ENCODE measurements at regions of chr19 and their contacts with region 1.

Region 1: GRCh38 chr19:4791170-4792018 is at the start of gene FEM1A:
- DNase-seq: peak; percentile 99
- H3K4me3 Mint-ChIP-seq: peak within 1 kb of the TSS; percentile 80
- H3K27ac Mint-ChIP-seq: peak within 1 kb of the TSS; percentile 81
- H3K4me1 Mint-ChIP-seq: peaks cover 38% of the 10 kb centered on the region
- H3K27me3 Mint-ChIP-seq: no peaks in the 10 kb centered on the region
- total RNA-seq, gene FEM1A: 9.2 to 9.3 TPM

Region 2: DNA sequence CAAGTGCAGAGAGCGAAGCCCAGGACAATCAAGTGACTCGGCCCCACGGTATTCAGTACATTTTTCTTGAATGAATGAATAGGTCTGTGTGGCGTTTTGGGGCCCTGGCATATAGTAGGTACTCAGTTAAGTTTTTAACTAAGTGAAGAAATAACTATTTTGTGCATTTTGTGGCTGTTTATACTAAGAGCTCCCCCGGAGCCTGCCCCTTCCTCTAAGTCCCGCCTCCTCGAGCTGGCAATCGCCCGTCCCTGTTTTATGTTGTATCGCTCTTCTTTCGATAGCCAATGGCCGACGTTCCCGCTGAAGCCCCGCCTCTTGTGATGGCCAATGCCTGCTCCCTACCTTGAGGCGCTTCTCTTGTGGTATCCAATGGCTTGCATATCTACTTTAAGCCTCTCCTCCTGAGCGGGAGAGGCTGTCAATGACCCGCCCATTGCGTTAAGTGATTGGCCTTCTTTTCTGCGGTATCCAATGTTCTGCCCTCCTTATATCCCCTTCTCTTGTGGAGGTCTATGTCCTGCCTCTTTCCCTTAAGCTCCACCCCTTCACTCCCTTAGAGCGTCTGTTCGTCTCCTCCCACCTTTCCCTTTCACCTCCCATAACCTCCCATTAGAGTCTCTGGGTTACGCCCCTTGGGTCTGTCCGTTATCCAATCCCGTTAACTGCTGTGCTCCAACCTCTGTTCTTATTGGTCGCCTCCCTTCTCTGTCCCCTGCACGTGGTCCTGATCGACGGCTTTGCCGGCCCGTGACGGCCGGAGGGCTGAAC is 319.8 kb before region 1 on chr19:
- CTCF ChIA-PET with region 1: interaction called, 4 read pairs
- POLR2A ChIA-PET with region 1: interaction called, 3 read pairs
- intact Hi-C with region 1: loop called (anchors 5 kb)
- DNase-seq: peak; percentile 99
- H3K4me3 Mint-ChIP-seq: no peak overlapping the region
- H3K27ac Mint-ChIP-seq: no peak overlapping the region
- H3K4me1 Mint-ChIP-seq: peaks cover 21% of the 10 kb centered on the region
- H3K27me3 Mint-ChIP-seq: no peaks in the 10 kb centered on the region

Region 3: GRCh38 chr19:4669723-4670480 is 121.5 kb before region 1 on chr19 and contains the start of gene MYDGF:
- CTCF ChIA-PET with region 1: interaction called, 3 read pairs
- POLR2A ChIA-PET with region 1: no interaction called
- intact Hi-C with region 1: loop called (anchors 1 kb)
- DNase-seq: peak; percentile 95
- H3K4me3 Mint-ChIP-seq: peak within 1 kb of the TSS; percentile 87
- H3K27ac Mint-ChIP-seq: peak within 1 kb of the TSS; percentile 75
- H3K4me1 Mint-ChIP-seq: peaks cover 18% of the 10 kb centered on the region
- H3K27me3 Mint-ChIP-seq: no peaks in the 10 kb centered on the region
- total RNA-seq, gene MYDGF: 72.9 to 74.7 TPM

Region 4: DNA sequence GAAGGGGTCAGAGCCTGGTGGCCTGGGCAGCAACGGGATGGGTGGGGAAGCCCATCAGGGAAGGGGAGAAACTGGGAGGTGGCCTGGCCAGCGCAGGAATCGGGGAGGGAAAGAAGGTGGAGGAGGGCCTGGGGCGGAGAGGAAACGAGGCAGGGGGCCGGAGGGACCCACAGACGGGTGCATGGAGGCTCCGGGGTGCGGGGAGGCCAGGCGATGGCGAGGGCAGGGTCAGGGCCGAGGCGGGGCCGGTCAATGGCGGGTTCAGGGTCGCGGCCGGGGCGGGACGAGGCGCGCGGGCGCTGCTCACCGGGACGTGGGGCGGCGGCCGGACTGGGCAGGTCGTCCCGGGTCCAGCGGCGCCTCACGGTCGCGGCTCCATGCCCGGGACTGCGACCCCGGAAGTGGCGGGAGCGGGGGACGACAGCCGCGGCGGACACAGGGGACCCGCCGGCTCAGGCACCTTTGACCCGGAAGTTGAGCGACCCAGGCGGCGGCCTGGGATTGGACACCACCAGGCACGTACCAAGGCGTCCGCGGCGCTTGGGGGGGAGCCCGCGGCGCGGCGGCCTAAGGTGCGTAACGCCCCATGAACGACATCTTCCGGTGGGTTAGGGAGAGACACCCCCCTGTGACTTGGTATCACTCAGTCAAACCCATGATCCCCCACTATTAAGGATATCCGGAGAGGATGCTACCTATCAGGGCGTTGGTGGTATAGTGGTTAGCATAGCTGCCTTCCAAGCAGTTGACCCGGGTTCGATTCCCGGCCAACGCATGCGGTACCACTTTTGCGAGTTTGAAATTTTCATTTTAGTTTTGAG is 67.8 kb before region 1 on chr19 and contains the start of gene DPP9:
- CTCF ChIA-PET with region 1: interaction called, 161 read pairs
- POLR2A ChIA-PET with region 1: interaction called, 13 read pairs
- intact Hi-C with region 1: loop called (anchors 1 kb)
- DNase-seq: peak; percentile 98
- H3K4me3 Mint-ChIP-seq: peak within 1 kb of the TSS; percentile 84
- H3K27ac Mint-ChIP-seq: peak within 1 kb of the TSS; percentile 95
- H3K4me1 Mint-ChIP-seq: peaks cover 28% of the 10 kb centered on the region
- H3K27me3 Mint-ChIP-seq: peaks cover 5% of the 10 kb centered on the region
- total RNA-seq, gene DPP9: 54.8 to 57.5 TPM

Region 5: GRCh38 chr19:4732680-4733114 is 58.7 kb before region 1 on chr19:
- CTCF ChIA-PET with region 1: interaction called, 161 read pairs
- POLR2A ChIA-PET with region 1: interaction called, 4 read pairs
- intact Hi-C with region 1: loop called (anchors 1 kb)
- DNase-seq: peak; percentile 70
- H3K4me3 Mint-ChIP-seq: peak overlapping the region; percentile 20
- H3K27ac Mint-ChIP-seq: no peak overlapping the region
- H3K4me1 Mint-ChIP-seq: peaks cover 4% of the 10 kb centered on the region
- H3K27me3 Mint-ChIP-seq: peaks cover 4% of the 10 kb centered on the region

Region 6: DNA sequence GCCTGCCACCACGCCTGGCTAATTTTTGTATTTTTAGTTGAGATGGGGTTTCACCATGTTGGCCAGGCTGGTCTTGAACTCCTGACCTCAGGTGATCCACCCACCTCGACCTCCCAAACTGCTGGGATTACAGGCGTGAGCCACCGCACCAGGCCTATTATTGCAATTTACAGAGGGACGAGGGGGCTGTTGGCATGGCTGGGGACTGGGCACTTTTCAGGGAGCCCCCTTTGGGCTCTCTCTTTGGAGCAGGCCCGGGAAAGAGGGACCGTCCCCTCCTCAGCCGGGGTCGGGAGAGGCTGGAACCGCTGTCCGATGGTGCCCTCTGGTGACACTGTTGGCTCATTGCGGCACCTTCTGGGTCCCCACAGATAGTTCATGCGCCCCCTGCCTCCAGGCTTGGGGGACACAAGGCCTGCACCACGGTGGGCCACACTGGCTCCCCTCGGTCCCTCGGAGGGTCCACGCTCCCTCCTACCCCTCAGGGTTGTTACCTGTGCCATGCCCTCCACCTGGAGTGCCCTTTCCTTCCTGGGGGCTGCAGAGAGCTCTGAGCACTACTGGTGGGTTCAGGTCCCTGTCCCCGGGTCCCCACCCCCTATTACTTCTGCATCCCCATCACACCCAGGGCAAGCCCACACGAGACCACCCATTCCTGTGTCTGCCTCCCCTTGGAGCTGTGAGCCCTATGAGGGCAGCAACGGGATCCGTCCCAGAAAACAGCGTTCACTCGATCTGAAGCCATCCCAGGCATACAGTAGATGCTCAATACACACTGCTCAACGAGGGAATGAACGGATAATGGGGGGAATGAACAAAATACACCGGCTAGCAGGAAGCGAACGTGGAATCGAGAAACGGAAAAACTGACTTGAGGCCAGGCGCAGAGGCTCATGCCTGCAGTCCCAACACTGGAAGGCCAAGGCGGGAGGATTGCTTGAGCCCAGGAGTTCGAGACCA is 12.6 kb after region 1 on chr19:
- CTCF ChIA-PET with region 1: interaction called, 35 read pairs
- POLR2A ChIA-PET with region 1: interaction called, 4 read pairs
- intact Hi-C with region 1: no loop called
- DNase-seq: peak; percentile 73
- H3K4me3 Mint-ChIP-seq: no peak overlapping the region
- H3K27ac Mint-ChIP-seq: no peak overlapping the region
- H3K4me1 Mint-ChIP-seq: no peaks in the 10 kb centered on the region
- H3K27me3 Mint-ChIP-seq: no peaks in the 10 kb centered on the region

Region 7: DNA sequence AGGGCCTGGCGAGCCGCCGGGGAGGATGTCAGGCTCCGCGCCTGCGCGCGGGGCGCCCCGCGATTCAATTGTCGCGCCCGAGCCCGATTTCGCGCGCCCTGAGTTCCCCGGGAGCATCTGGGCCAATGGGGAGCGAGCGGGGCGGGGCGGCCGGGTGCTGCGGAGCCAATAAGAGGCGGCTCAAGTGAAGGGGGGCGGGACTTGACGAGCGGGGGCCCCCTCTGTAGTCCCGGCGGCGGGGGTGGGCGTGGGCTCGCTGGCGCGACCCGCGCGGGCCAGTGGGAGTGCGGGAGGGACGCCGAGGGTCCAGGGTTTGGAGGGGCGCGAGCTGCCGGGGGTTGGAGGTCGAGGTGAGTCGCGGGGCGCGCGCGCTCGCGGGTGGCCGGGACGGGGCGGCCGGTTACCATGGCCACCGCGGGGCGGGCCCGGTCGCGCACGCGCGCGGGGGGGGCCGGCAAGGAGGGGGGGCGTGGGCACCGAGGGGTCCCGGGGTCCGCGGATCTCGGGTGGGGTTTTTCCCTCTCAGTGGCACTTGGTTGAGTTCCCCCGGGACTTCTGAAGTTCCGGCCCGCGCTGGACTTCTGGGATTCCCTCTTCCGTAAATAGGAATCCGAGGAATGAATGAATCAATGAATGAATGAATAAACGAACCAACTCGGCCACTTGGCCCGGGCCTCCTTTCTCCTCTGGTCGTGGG is 118.7 kb after region 1 on chr19:
- CTCF ChIA-PET with region 1: interaction called, 10 read pairs
- POLR2A ChIA-PET with region 1: interaction called, 4 read pairs
- intact Hi-C with region 1: no loop called
- DNase-seq: peak; percentile 97
- H3K4me3 Mint-ChIP-seq: peak overlapping the region; percentile 89
- H3K27ac Mint-ChIP-seq: peak overlapping the region; percentile 65
- H3K4me1 Mint-ChIP-seq: peaks cover 50% of the 10 kb centered on the region
- H3K27me3 Mint-ChIP-seq: no peaks in the 10 kb centered on the region